Right ventricle myocardium superior (tissue), 1 donor: ENCODE measurements at regions of chr11 and their contacts with region 1.

Region 1: GRCh38 chr11:116948391-116948790 is 111.0 kb upstream of the APOA1 start:
- DNase-seq: no peak
- ATAC-seq: no peak

Region 2: GRCh38 chr11:116895048-116895757 is 53.2 kb before region 1 on chr11:
- intact Hi-C with region 1: loop called (anchors 10 kb)
- DNase-seq: peak; percentile 44
- ATAC-seq: peak; percentile 36

Region 3: GRCh38 chr11:116913000-116913399 is 35.4 kb before region 1 on chr11:
- intact Hi-C with region 1: no loop called
- DNase-seq: no peak
- ATAC-seq: peak; percentile 61